ENCODE measurements at regions of chr17 and their contacts with region 1.

Region 1: GRCh38 chr17:49390548-49391324 is 23.9 kb downstream of the PHB1 start:
- DNase-seq: peak in 1 of 2 donors; percentile 67
- ATAC-seq: no peak
- H3K4me3 ChIP-seq: no peak overlapping the region
- H3K27ac ChIP-seq: no peak overlapping the region
- H3K4me1 ChIP-seq: no peaks in the 10 kb centered on the region
- H3K27me3 ChIP-seq: no peaks in the 10 kb centered on the region

Region 2: GRCh38 chr17:49315551-49316257 is 75.0 kb before region 1 on chr17:
- intact Hi-C with region 1: loop called (anchors 1 kb)
- DNase-seq: peak; percentile 78 to 80
- ATAC-seq: peak; percentile 95
- H3K4me3 ChIP-seq: no peak overlapping the region
- H3K27ac ChIP-seq: peak overlapping the region in 1 of 2 donors; percentile 40
- H3K4me1 ChIP-seq: peaks cover 0 to 4% of the 10 kb centered on the region in 2 donors
- H3K27me3 ChIP-seq: no peaks in the 10 kb centered on the region

Region 3: GRCh38 chr17:49361902-49362722 is 28.6 kb before region 1 on chr17 and contains the start of gene ZNF652:
- intact Hi-C with region 1: loop called in 1 of 2 experiments (anchors 1 kb)
- DNase-seq: peak; percentile 92 to 95
- ATAC-seq: peak; percentile 95
- H3K4me3 ChIP-seq: peak within 1 kb of the TSS; percentile 89 to 96
- H3K27ac ChIP-seq: peak within 1 kb of the TSS; percentile 5 to 90
- H3K4me1 ChIP-seq: peaks cover 0 to 3% of the 10 kb centered on the region in 2 donors
- H3K27me3 ChIP-seq: no peaks in the 10 kb centered on the region
- total RNA-seq, gene ZNF652: 41.0 to 52.8 TPM

Measured in aorta (tissue), 5 donors.